CD4-positive, alpha-beta T cell (primary cell): ENCODE measurements at regions of chr7 and their contacts with region 1.

Region 1: DNA sequence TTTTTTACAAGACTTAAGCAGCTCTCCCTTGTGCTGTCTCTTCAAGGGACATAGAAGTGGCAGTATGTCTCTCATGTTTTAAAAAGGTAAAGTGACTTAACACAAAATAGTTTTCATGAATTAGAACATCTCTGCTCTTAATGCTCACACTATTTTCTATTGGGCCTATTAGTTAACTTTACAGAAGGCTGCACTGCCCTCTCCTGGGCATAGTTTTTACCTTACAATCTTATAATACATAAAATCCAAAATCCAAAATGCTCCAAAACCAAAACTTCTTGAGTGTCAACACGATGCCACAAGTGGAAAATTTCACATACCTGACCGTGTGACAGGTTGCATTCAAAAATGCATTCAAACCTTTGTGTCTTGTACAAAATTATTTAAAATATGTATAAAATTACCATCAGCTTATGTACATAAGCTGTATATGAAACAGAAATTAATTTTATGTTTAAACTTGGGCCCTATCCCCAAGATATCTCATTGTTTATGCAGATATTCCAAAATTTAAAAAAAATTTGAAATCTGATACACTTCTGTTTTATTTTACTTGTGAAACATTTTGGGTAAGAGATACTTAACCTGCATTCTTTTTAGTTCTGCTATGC is 25.8 kb downstream of the TES start:
- DNase-seq: peak; percentile 28 to 81 (median 50)
- ATAC-seq: peak; percentile 79
- H3K4me3 ChIP-seq: no peak overlapping the region
- H3K4me3 Mint-ChIP-seq: no peak overlapping the region
- H3K27ac ChIP-seq: no peak overlapping the region
- H3K27ac Mint-ChIP-seq: peak overlapping the region; percentile 65
- H3K4me1 ChIP-seq: peaks cover 16% of the 10 kb centered on the region
- H3K4me1 Mint-ChIP-seq: peaks cover 94% of the 10 kb centered on the region
- H3K27me3 ChIP-seq: no peaks in the 10 kb centered on the region
- H3K27me3 Mint-ChIP-seq: no peaks in the 10 kb centered on the region
- CTCF ChIP-seq: peak; percentile 82

Region 2: GRCh38 chr7:116138202-116138801 is 97.8 kb before region 1 on chr7:
- CTCF ChIA-PET with region 1: interaction called, 4 read pairs
- POLR2A ChIA-PET with region 1: no interaction called
- intact Hi-C with region 1: loop called in 1 of 2 experiments (anchors 1 kb)
- DNase-seq: peak in 4 of 14 experiments; percentile 15 to 71 (median 60)
- ATAC-seq: peak; percentile 79
- H3K4me3 ChIP-seq: no peak overlapping the region
- H3K4me3 Mint-ChIP-seq: no peak overlapping the region
- H3K27ac ChIP-seq: no peak overlapping the region
- H3K27ac Mint-ChIP-seq: no peak overlapping the region
- H3K4me1 ChIP-seq: peaks cover 3% of the 10 kb centered on the region
- H3K4me1 Mint-ChIP-seq: peaks cover 5% of the 10 kb centered on the region
- H3K27me3 ChIP-seq: no peaks in the 10 kb centered on the region
- H3K27me3 Mint-ChIP-seq: peaks cover 6% of the 10 kb centered on the region
- CTCF ChIP-seq: peak; percentile 83

Region 3: GRCh38 chr7:116197360-116197759 is 38.8 kb before region 1 on chr7:
- CTCF ChIA-PET with region 1: interaction called, 15 read pairs
- POLR2A ChIA-PET with region 1: interaction called, 8 read pairs
- intact Hi-C with region 1: no loop called
- DNase-seq: no peak
- ATAC-seq: no peak
- H3K4me3 ChIP-seq: no peak overlapping the region
- H3K4me3 Mint-ChIP-seq: no peak overlapping the region
- H3K27ac ChIP-seq: no peak overlapping the region
- H3K27ac Mint-ChIP-seq: no peak overlapping the region
- H3K4me1 ChIP-seq: no peaks in the 10 kb centered on the region
- H3K4me1 Mint-ChIP-seq: no peaks in the 10 kb centered on the region
- H3K27me3 ChIP-seq: no peaks in the 10 kb centered on the region
- H3K27me3 Mint-ChIP-seq: no peaks in the 10 kb centered on the region
- CTCF ChIP-seq: no peak

Region 4: GRCh38 chr7:116218051-116218645 is 18.0 kb before region 1 on chr7:
- CTCF ChIA-PET with region 1: interaction called, 34 read pairs
- POLR2A ChIA-PET with region 1: interaction called, 117 read pairs
- intact Hi-C with region 1: loop called in 1 of 2 experiments (anchors 2 kb)
- DNase-seq: no peak
- ATAC-seq: no peak
- H3K4me3 ChIP-seq: no peak overlapping the region
- H3K4me3 Mint-ChIP-seq: peak overlapping the region; percentile 73
- H3K27ac ChIP-seq: no peak overlapping the region
- H3K27ac Mint-ChIP-seq: peak overlapping the region; percentile 76
- H3K4me1 ChIP-seq: peaks cover 47% of the 10 kb centered on the region
- H3K4me1 Mint-ChIP-seq: peaks cover 91% of the 10 kb centered on the region
- H3K27me3 ChIP-seq: no peaks in the 10 kb centered on the region
- H3K27me3 Mint-ChIP-seq: no peaks in the 10 kb centered on the region
- CTCF ChIP-seq: no peak

Region 5: DNA sequence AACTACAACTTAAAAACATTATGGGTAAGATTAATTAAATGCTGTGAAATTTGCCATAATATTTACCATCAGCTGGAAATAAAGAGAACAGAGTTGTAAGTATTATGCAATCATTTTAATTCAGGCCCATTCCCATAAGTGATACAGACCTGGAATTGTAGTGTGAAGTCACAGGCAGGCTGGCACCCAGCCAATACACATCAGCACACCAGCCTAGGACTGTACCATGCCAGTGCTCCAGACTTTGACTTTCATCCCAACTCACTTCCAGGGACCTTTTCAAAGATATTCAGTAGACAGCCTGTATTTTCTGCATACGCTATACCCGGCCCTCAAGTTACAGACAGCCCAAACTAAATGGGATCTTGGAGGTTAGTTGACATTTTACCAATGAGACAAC is 117.5 kb after region 1 on chr7:
- CTCF ChIA-PET with region 1: no interaction called
- POLR2A ChIA-PET with region 1: no interaction called
- intact Hi-C with region 1: no loop called
- DNase-seq: no peak
- ATAC-seq: no peak
- H3K4me3 ChIP-seq: no peak overlapping the region
- H3K4me3 Mint-ChIP-seq: no peak overlapping the region
- H3K27ac ChIP-seq: no peak overlapping the region
- H3K27ac Mint-ChIP-seq: no peak overlapping the region
- H3K4me1 ChIP-seq: no peaks in the 10 kb centered on the region
- H3K4me1 Mint-ChIP-seq: no peaks in the 10 kb centered on the region
- H3K27me3 ChIP-seq: peaks cover 0 to 4% of the 10 kb centered on the region in 2 experiments
- H3K27me3 Mint-ChIP-seq: peaks cover 10% of the 10 kb centered on the region
- CTCF ChIP-seq: no peak

Region 6: GRCh38 chr7:116588641-116589594 is 352.8 kb after region 1 on chr7:
- CTCF ChIA-PET with region 1: no interaction called
- POLR2A ChIA-PET with region 1: no interaction called
- intact Hi-C with region 1: loop called in 1 of 2 experiments (anchors 5 kb)
- DNase-seq: peak in 3 of 14 experiments; percentile 46 to 61 (median 57)
- ATAC-seq: no peak
- H3K4me3 ChIP-seq: no peak overlapping the region
- H3K4me3 Mint-ChIP-seq: no peak overlapping the region
- H3K27ac ChIP-seq: no peak overlapping the region
- H3K27ac Mint-ChIP-seq: no peak overlapping the region
- H3K4me1 ChIP-seq: peaks cover 6% of the 10 kb centered on the region
- H3K4me1 Mint-ChIP-seq: peaks cover 22% of the 10 kb centered on the region
- H3K27me3 ChIP-seq: peaks cover 0 to 26% of the 10 kb centered on the region in 2 experiments
- H3K27me3 Mint-ChIP-seq: peaks cover 25% of the 10 kb centered on the region
- CTCF ChIP-seq: peak; percentile 95

Region 7: GRCh38 chr7:117127585-117128168 is 891.6 kb after region 1 on chr7:
- CTCF ChIA-PET with region 1: no interaction called
- POLR2A ChIA-PET with region 1: no interaction called
- intact Hi-C with region 1: loop called in 1 of 2 experiments (anchors 10 kb)
- DNase-seq: peak in 13 of 14 experiments; percentile 15 to 74 (median 36)
- ATAC-seq: peak; percentile 68
- H3K4me3 ChIP-seq: no peak overlapping the region
- H3K4me3 Mint-ChIP-seq: no peak overlapping the region
- H3K27ac ChIP-seq: no peak overlapping the region
- H3K27ac Mint-ChIP-seq: no peak overlapping the region
- H3K4me1 ChIP-seq: no peaks in the 10 kb centered on the region
- H3K4me1 Mint-ChIP-seq: no peaks in the 10 kb centered on the region
- H3K27me3 ChIP-seq: no peaks in the 10 kb centered on the region
- H3K27me3 Mint-ChIP-seq: no peaks in the 10 kb centered on the region
- CTCF ChIP-seq: peak; percentile 92